ENCODE measurements at regions of chr2 and their contacts with region 1.

Region 1: DNA sequence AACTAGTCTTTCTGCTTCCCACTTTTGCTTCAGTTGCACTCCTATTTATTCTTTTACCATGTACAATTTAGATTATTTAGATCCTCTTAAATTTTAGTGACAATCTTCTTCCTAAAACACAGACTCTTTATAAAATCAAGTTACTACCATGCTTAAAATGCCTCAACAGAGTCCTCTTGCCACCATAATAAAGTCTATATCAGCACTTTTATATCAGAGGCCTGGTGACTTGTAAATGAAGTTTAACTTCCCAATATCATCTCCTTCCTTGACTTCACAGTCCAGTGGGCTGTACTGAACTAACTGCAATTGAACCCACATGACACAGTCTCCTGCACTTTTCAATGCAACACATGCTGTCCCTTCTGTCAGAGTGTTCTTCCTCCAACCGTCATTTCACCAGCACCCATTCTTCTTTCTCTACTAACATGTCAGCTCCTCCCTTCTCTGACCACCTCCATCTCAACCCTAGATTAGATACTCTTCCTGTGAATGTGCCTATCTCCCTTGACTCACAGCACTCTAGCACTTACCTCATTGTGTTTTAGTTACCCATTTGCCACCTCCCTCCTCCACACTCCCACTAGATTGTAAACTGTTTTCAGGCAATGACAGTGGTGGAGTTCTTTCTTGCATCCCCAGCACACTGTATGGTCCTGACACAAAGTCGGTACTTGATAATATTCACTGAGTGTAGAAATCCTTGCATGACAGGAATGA is 414.9 kb downstream of the SATB2 start:
- DNase-seq: no peak
- ATAC-seq: no peak
- H3K4me3 Mint-ChIP-seq: no peak overlapping the region
- H3K27ac Mint-ChIP-seq: no peak overlapping the region
- H3K4me1 Mint-ChIP-seq: peaks cover 12% of the 10 kb centered on the region
- H3K27me3 Mint-ChIP-seq: no peaks in the 10 kb centered on the region
- CTCF ChIP-seq: no peak

Region 2: GRCh38 chr2:198394208-198394607 is 648.6 kb before region 1 on chr2:
- CTCF ChIA-PET with region 1: no interaction called
- POLR2A ChIA-PET with region 1: interaction called, 10 read pairs
- DNase-seq: no peak
- ATAC-seq: no peak
- H3K4me3 Mint-ChIP-seq: no peak overlapping the region
- H3K27ac Mint-ChIP-seq: no peak overlapping the region
- H3K4me1 Mint-ChIP-seq: no peaks in the 10 kb centered on the region
- H3K27me3 Mint-ChIP-seq: no peaks in the 10 kb centered on the region; the same call in 1 of the 2 replicates
- CTCF ChIP-seq: no peak

Region 3: GRCh38 chr2:199070322-199070949 is 27.6 kb after region 1 on chr2:
- CTCF ChIA-PET with region 1: no interaction called
- POLR2A ChIA-PET with region 1: no interaction called
- DNase-seq: no peak
- ATAC-seq: no peak
- H3K4me3 Mint-ChIP-seq: no peak overlapping the region
- H3K27ac Mint-ChIP-seq: no peak overlapping the region
- H3K4me1 Mint-ChIP-seq: peaks cover 8% of the 10 kb centered on the region; the same call in 1 of the 2 replicates
- H3K27me3 Mint-ChIP-seq: no peaks in the 10 kb centered on the region
- CTCF ChIP-seq: no peak